Left ventricle myocardium inferior (tissue), 1 donor: ENCODE measurements at regions of chr15 and their contacts with region 1.

Region 1: GRCh38 chr15:80251428-80252120 is 439 bp downstream of the CTXND1 start:
- DNase-seq: no peak
- H3K4me3 ChIP-seq: peak overlapping the region; percentile 69
- H3K27ac ChIP-seq: peak overlapping the region; percentile 79
- H3K4me1 ChIP-seq: peaks cover 11% of the 10 kb centered on the region
- H3K27me3 ChIP-seq: peaks cover 78% of the 10 kb centered on the region
- CTCF ChIP-seq: no peak

Region 2: GRCh38 chr15:79978655-79979514 is 272.7 kb before region 1 on chr15:
- intact Hi-C with region 1: no loop called
- DNase-seq: no peak
- H3K4me3 ChIP-seq: no peak overlapping the region
- H3K27ac ChIP-seq: peak overlapping the region; percentile 58
- H3K4me1 ChIP-seq: peaks cover 13% of the 10 kb centered on the region
- H3K27me3 ChIP-seq: no peaks in the 10 kb centered on the region
- CTCF ChIP-seq: no peak

Region 3: GRCh38 chr15:80199366-80199765 is 52.2 kb before region 1 on chr15:
- intact Hi-C with region 1: loop called (anchors 10 kb)
- DNase-seq: no peak
- H3K4me3 ChIP-seq: no peak overlapping the region
- H3K27ac ChIP-seq: no peak overlapping the region
- H3K4me1 ChIP-seq: no peaks in the 10 kb centered on the region
- H3K27me3 ChIP-seq: peaks cover 15% of the 10 kb centered on the region
- CTCF ChIP-seq: no peak